ENCODE measurements at regions of chr16 and their contacts with region 1.

Region 1: DNA sequence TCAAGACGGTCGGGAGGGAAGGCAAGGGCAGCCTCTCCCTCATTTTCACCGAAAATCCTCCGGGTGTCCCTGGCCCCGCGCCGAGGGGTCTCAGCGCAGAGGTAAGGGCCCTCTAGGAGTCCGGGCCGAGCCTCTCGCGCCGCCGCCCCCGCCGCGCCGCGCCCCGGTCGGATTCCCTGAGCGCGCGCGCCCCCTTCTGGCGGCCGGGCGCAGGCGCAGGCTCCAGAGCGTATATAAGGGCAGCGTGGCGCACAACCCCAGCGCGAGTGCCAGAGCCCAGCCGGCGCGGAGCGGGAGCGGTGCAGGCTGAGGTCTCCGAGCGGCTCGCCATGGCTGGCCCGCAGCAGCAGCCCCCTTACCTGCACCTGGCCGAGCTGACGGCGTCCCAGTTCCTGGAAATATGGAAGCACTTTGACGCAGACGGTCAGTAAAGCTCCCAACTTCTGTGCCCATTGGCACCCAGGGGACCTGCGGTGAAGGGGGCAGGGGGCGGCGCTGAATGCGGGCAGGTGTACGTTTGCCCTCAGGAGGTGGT is at the start of gene CALB2:
- DNase-seq: peak; percentile 66 to 90
- ATAC-seq: peak; percentile 91
- H3K4me3 ChIP-seq: no peak within 1 kb of the TSS
- H3K27ac ChIP-seq: no peak within 1 kb of the TSS
- H3K4me1 ChIP-seq: no peaks in the 10 kb centered on the region
- H3K27me3 ChIP-seq: no peaks in the 10 kb centered on the region
- total RNA-seq, gene CALB2: 0.84 to 1.1 TPM

Region 2: GRCh38 chr16:70324998-70325747 is 1033.4 kb before region 1 on chr16:
- intact Hi-C with region 1: no loop called
- DNase-seq: no peak
- ATAC-seq: no peak
- H3K4me3 ChIP-seq: no peak overlapping the region
- H3K27ac ChIP-seq: no peak overlapping the region
- H3K4me1 ChIP-seq: no peaks in the 10 kb centered on the region
- H3K27me3 ChIP-seq: no peaks in the 10 kb centered on the region

Region 3: GRCh38 chr16:70679666-70680494 is 678.7 kb before region 1 on chr16:
- intact Hi-C with region 1: loop called in 1 of 2 experiments (anchors 10 kb)
- DNase-seq: peak; percentile 52 to 75
- ATAC-seq: no peak
- H3K4me3 ChIP-seq: no peak overlapping the region
- H3K27ac ChIP-seq: no peak overlapping the region
- H3K4me1 ChIP-seq: no peaks in the 10 kb centered on the region
- H3K27me3 ChIP-seq: no peaks in the 10 kb centered on the region

Region 4: DNA sequence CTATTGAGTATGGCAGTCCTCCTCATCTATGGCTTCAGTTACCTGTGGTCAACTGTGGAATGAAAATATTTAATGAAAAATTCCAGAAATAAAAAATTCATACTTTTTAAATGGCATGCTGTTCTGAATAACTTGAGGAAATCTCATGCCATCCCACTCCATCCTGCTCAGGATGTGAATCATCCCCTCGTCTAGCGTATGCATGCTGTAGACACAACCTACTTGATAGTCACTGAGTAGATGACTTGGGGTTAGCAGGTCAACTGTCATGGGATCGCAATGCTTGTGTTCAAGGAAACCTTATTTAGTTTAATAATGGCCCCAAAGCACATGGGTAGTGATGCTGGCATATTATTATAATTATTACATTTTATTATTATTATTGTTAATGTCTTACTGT is 552.7 kb before region 1 on chr16:
- intact Hi-C with region 1: loop called in 1 of 2 experiments (anchors 5 kb)
- DNase-seq: no peak
- ATAC-seq: no peak
- H3K4me3 ChIP-seq: no peak overlapping the region
- H3K27ac ChIP-seq: no peak overlapping the region
- H3K4me1 ChIP-seq: no peaks in the 10 kb centered on the region
- H3K27me3 ChIP-seq: no peaks in the 10 kb centered on the region